ENCODE measurements at regions of chr3 and their contacts with region 1.

Region 1: GRCh38 chr3:87082796-87083440 is 92.0 kb upstream of the VGLL3 start:
- DNase-seq: no peak

Region 2: DNA sequence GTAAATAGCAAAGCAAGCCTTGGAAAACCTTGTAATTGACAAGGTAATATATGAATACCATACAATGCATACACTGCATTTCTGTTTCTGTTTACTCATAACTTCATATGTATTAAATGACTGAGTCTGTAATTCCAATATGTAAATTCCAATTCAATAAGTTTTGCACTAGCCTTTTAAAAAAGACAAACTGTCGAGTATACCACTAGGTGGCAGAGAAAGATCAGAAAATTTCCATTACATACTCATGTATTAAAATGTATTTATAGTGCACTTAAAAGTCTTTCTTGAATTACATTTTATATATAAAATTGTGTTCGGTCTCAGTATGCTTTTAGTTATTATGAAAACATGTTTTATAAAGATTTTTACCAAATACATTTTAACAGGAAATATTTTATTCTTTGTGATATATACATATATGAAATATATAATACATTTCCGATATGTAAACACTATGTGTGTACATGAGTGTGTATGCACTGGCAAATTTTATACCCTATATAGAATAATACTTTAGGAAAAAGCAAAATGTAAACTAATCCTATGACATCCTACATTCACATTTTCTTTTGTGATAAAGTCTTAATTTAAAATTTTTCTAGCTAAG is 308.7 kb before region 1 on chr3:
- intact Hi-C with region 1: loop called (anchors 5 kb)
- DNase-seq: no peak

Region 3: GRCh38 chr3:86785386-86785785 is 297.5 kb before region 1 on chr3:
- intact Hi-C with region 1: loop called (anchors 2 kb)
- DNase-seq: no peak

Region 4: DNA sequence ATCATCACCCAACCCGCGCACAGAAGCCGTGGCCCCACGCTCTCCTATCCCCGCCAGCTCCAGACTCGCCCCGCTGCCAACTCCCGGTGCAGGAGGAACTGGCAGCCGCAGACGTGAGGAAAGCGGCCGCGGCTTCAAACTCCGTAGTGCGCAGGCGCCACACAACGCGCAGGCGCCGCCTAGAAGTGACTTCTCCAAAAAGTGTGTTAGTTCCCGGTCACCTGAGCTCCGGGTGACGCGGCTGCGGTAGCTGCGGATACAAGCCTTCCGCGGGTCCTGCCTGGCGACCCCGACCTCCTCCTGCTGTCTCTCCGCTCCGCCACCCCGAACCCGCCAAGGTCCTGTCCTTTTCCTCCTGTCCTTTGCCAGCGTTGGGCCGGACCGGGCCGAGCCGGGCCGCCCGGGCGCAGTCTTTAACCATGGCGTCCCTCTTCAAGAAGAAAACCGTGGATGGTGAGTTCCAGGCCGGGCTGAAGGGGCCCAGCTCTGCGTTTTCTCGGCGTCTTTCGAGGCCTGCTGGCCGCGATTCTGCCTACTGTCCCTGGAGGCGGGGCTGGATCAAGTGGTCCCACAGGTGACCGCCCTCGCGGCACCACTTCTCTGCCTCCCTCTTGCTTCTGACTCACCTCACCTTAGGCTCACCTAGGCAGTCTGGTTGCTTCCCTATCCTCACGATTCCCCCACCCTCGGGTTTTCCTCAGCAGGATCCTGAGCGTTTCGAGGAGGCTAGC is 144.4 kb after region 1 on chr3 and contains the start of gene CHMP2B:
- intact Hi-C with region 1: loop called (anchors 10 kb)
- DNase-seq: peak; percentile 85 to 99 (median 90)